ENCODE measurements at regions of chr5 and their contacts with region 1.

Region 1: DNA sequence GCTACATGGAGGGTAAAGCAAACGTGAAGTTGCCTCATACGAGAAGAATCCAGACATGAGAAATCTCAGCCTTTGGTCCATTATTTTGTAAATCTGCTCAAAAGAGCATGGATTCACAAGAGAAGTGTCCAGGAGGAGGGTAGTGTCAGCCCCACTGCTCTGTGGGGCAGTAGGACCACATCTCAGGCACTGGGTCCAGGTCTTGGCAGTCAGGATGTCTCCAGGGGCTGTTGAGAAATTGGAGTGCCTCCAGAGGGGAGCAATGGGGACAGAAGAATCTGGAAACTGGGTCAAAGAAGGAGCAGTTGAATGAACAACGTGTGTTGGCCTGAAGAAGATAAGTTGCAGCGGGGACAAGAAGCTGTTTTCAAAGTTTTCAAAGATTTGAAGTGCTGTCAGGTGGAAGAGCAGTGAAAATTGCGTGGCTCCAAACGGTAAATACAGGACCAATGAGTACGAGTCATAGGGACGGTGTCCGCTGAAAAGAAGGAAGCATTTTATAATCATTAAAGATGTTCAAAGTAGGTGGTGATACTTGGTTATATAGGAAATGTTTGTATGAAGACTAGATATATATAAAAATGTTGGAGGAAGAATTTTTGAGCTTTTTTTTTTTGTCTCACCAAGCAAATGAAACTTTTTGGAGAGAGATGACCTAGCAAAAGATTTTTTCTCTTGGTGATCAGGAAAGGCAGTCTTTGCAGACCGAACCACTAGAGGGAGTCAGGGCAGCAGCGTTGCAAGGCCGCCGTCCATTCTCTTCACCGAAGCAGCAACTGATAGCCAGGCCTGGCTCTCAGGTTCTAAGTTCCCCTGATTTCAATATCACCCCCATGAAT is 57.1 kb upstream of the ZBED3 start:
- DNase-seq: no peak
- ATAC-seq: peak; percentile 63

Region 2: DNA sequence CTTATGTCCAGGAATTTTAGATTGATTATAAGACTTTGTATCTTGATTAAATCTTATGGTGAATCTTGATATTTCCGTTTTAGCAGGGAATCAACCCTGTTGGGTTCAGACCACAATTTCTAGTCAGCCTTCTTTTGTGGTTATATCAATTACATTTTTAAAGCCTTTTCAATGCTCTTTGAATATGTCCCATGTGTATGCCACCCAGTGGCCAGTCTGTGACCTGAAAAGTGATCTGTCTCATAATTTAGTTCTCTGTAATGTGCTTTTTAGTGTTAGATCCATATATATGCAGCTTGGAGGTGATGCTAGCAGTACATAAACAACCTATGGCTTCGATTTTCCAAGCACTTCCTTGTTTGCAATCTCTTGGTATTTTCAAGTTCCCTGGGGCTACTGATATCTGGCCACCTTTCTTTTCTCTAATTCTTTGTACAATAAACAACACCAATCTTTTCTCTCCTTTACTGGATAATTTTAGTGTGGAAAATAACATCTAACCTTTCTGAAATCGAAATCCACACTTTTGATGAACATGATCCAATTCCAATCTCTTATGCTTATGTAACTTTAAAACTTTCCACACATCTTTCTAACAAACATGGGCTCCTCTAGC is 95.0 kb after region 1 on chr5:
- intact Hi-C with region 1: loop called (anchors 2 kb)
- DNase-seq: no peak
- ATAC-seq: no peak

Region 3: GRCh38 chr5:77491783-77492652 is 347.8 kb after region 1 on chr5 and contains the start of gene WDR41:
- intact Hi-C with region 1: loop called (anchors 2 kb)
- DNase-seq: peak; percentile 97
- ATAC-seq: peak; percentile 97
- total RNA-seq, gene WDR41: 28.3 TPM

Measured in Right ventricle myocardium inferior (tissue), 1 donor.